ENCODE measurements at regions of chr1 and their contacts with region 1.

Region 1: GRCh38 chr1:205791568-205792180 is 16.4 kb upstream of the RAB29 start:
- DNase-seq: peak; percentile 56
- ATAC-seq: peak; percentile 70

Region 2: DNA sequence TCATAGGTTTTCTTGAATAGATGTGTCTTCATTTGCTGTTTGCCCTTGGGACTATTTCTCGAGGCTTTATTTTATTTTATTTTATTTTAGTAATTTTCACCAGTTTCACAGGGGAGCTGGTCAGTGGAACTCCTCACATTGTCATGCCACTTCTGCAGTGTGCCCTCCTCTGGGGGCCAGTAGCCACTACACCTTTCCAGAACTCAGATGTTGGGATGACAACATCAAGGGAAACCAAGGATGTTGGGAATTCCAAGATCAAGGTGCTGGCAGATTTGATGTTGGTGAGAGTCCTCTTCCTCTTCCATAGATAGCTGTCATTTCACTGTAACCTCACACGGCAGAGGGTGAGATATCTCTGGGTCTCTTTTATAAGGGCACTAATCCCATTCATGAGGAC is 116.1 kb after region 1 on chr1:
- intact Hi-C with region 1: loop called (anchors 5 kb)
- DNase-seq: no peak
- ATAC-seq: peak; percentile 65

Region 3: DNA sequence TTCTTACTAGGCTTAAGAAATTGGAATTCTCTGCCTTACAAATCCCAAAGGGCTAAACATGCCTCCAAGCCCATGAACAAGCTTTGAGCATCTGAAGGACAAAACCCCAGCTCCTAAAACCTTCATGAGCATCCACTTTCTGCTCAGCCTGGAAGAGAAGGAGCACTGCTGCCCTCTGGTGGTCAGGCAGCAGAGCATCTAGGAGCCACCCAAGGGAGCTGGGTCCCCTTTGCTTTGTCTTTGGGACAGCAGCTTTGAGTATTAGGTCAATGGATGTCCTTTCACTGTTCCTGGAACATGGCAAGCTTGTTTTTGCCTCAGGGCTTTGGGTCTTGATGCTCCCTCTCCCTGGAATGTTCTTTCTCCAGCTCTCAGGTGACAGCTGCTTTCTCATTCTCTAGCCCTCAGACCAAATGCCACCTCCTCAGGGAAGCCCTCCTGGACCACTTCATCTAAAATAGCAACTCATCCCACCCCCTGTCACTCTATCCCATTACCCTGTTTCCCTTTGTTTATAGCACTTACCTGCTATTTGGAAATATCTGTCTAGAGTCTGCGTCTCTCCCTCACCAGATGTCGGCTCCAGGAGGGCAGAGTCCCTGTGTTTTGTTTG is 185.8 kb after region 1 on chr1:
- intact Hi-C with region 1: loop called (anchors 10 kb)
- DNase-seq: peak; percentile 72
- ATAC-seq: peak; percentile 84

Region 4: GRCh38 chr1:206106328-206107167 is 314.9 kb after region 1 on chr1:
- intact Hi-C with region 1: loop called (anchors 5 kb)
- DNase-seq: peak; percentile 84
- ATAC-seq: peak; percentile 91

Measured in left ventricle myocardium superior (tissue), 1 donor.